Activated CD4-positive, alpha-beta T cell treated with anti-CD3 and anti-CD28 coated beads for 36 hours (primary cell): ENCODE measurements at regions of chr2 and their contacts with region 1.

Region 1: DNA sequence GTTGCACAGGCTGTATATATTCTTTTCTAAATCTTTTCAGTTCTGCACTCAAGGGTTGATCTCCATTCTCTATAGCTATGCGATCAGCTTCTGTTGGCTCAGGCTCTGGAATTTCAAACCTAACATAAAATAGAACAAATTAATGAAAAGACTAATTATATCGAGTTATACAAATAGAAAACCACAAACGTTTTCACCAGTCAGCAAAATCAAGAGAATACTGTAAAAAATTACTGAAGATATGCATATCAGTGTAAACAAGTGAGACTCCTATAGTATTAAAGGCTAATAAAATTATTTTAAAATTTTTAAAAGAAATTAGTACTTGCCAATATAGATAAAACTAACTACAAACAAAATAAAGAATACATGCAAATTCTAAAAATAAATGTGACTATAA is 107.0 kb downstream of the SOS1 start:
- DNase-seq: no peak
- ATAC-seq: no peak
- H3K4me3 Mint-ChIP-seq: no peak overlapping the region
- H3K27ac Mint-ChIP-seq: no peak overlapping the region
- H3K4me1 Mint-ChIP-seq: peaks cover 4% of the 10 kb centered on the region
- H3K27me3 Mint-ChIP-seq: no peaks in the 10 kb centered on the region

Region 2: DNA sequence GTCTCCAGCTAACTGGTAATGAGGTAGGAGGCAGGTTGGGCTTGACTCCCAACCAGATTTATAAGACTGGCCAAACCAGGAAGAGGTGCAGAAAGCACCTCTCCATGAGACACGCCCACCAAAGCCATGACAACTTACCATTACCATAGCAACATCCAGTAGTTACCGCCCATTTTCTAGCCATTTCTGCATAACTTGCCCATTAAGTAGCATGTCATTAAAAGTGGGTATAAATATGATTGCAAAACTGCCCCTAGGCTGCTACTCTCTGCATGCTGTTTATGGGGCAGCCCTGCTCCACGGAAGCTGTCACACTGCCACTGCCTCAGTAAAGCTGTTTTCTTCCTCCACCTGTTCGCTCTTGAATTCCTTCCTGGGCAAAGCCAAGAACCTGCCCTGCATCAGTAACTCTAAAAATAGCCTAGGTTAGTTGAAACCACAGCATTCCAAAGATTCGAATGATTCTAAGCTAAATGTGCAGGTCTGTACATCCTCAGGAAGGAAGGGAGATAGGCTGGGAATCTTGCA is 768.7 kb before region 1 on chr2:
- CTCF ChIA-PET with region 1: no interaction called
- POLR2A ChIA-PET with region 1: no interaction called
- intact Hi-C with region 1: no loop called
- DNase-seq: no peak
- ATAC-seq: no peak
- H3K4me3 Mint-ChIP-seq: no peak overlapping the region
- H3K27ac Mint-ChIP-seq: no peak overlapping the region
- H3K4me1 Mint-ChIP-seq: no peaks in the 10 kb centered on the region
- H3K27me3 Mint-ChIP-seq: peaks cover 2% of the 10 kb centered on the region

Region 3: DNA sequence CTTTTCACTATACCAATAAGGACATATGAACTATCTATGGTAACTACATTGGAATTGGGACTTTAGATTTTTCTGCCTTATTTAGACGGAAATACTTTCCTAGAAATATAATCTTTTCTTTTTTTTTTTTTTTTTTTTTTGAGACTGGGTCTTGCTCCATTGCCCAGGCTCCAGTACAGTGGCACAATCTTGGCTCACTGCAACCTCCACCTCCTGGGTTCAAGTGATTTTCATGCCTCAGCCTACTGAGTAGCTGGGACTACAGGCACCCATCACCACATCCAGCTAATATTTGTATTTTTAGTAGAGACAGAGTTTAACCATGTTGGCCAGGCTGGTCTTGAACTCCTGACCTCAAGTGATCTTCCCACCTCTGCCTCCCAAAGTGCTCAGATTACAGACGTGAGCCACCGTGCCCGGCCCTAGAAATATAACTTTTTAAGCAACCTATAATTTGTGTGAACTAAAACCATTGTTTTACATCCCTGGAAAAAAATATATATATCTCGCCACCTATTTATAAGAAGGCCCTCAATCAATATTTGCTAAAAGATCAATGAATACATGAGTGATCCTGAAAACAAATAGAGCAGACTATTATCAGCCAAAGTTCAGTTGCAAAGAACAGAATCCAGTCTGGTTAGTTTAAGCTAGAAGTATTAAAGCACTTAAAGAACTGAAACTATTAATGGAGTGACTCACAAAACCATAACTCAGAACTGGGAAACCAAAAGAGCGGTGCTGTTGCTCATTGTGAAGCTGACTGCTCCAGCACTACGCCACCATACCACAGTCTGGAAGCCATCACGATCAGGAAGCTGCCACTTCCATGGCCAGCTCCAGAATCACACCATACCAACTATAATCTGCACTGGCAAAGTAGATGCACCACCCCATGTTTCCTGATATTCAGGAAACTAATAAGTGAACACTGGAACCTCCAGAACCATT is 402.7 kb before region 1 on chr2:
- CTCF ChIA-PET with region 1: no interaction called
- POLR2A ChIA-PET with region 1: no interaction called
- intact Hi-C with region 1: no loop called
- DNase-seq: peak; percentile 46
- ATAC-seq: peak; percentile 75
- H3K4me3 Mint-ChIP-seq: no peak overlapping the region
- H3K27ac Mint-ChIP-seq: no peak overlapping the region
- H3K4me1 Mint-ChIP-seq: peaks cover 66% of the 10 kb centered on the region
- H3K27me3 Mint-ChIP-seq: peaks cover 2% of the 10 kb centered on the region

Region 4: GRCh38 chr2:38771632-38772031 is 242.2 kb before region 1 on chr2:
- CTCF ChIA-PET with region 1: no interaction called
- POLR2A ChIA-PET with region 1: no interaction called
- intact Hi-C with region 1: no loop called
- DNase-seq: no peak
- ATAC-seq: no peak
- H3K4me3 Mint-ChIP-seq: no peak overlapping the region
- H3K27ac Mint-ChIP-seq: no peak overlapping the region
- H3K4me1 Mint-ChIP-seq: no peaks in the 10 kb centered on the region
- H3K27me3 Mint-ChIP-seq: peaks cover 13% of the 10 kb centered on the region

Region 5: GRCh38 chr2:38997781-38998180 is 16.1 kb before region 1 on chr2:
- CTCF ChIA-PET with region 1: interaction called, 3 read pairs
- POLR2A ChIA-PET with region 1: no interaction called
- intact Hi-C with region 1: loop called in 1 of 2 experiments (anchors 2 kb)
- DNase-seq: no peak
- ATAC-seq: no peak
- H3K4me3 Mint-ChIP-seq: no peak overlapping the region
- H3K27ac Mint-ChIP-seq: no peak overlapping the region
- H3K4me1 Mint-ChIP-seq: peaks cover under 1% of the 10 kb centered on the region
- H3K27me3 Mint-ChIP-seq: no peaks in the 10 kb centered on the region